Posterior cingulate gyrus (tissue), 11 donors: ENCODE measurements at regions of chr3 and their contacts with region 1.

Region 1: DNA sequence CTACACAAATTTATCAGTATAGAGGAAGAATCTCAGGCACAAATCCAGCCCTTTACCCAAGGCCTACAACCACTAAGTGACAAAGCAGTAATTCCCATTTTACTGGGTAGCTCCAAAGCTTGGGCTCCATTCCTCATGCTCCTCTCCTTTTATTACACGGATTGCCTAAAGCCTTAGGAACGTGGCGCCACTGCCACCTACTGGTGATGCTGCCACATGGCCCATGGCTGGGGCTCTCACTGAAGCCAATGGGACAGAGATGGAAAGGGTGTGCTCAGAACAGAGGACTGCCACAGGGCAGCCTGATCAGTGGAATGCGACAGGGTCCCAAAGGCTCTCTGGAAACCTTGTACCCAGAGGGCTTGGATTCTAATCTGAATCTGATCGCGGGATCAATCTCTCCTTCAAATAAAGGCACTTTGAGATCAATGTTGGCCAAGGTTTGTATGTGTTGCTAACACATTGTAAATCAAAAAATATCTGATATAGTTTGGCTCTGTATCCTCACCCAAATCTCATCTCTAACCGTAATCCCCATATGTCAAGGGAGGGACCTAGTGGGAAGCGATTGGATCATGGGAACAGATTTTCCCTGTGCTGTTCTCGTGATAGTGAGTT is 33.5 kb upstream of the LYZL4 start:
- DNase-seq: peak; percentile 79 to 98 (median 91)

Region 2: DNA sequence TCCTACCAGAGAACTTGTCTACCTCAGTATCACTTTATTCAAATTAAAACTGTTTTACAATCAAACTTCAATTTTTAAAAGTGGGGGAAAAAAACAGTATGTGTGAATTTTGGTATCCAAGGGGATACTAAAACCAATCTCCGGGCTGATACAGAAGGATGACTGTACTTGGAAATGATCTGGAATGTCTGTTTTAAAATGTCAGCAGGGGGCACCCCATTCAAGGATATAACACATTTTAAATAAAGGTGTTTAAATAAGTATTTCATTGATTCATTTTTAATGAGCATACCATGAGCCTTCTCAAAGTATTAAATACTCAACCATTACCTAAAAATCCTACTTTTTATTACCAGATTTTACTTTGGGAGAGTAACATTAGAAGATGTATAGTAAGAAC is 550.0 kb before region 1 on chr3:
- intact Hi-C with region 1: loop called (anchors 10 kb)
- DNase-seq: no peak

Region 3: DNA sequence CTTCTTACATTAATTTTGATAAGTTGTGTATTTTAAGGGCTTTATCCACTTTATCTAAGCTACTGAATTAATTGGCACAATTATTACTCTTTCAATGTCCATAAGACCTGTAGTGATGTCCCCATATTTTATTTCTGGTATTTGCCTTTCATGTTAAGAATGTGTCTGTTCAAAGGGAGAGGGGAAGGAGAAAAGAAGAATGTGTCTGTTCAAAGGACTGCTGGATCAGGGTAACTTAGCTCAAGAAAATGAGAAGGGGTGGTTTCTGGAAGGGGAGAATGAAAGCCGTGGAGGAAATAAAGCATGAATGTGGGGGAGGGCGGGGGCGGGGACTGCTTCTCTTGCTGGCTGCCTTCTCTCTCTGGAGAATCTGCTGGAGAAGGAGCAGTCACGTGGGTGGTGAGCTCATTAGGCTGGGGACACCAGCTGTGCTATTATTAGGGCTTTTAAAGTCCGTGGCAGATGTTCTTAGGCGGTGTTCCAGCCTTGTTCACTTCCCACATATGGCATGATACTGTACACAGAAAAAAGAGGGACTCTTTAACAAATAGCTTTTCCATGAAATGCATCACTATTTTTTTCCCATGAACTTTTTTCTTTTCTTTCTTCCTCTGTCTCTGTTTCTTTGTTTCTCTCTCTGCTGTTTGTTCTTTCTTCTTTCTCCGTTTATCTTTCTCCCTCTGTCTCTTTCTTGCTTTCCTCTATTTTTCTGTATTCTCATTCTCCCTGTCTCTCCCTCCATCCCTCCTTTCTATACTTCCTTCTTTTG is 418.4 kb before region 1 on chr3:
- intact Hi-C with region 1: no loop called
- DNase-seq: peak; percentile 72 to 97 (median 82)

Region 4: GRCh38 chr3:42118762-42119361 is 325.1 kb before region 1 on chr3:
- intact Hi-C with region 1: loop called (anchors 5 kb)
- DNase-seq: peak in 4 of 10 donors; percentile 40 to 88 (median 55)

Region 5: GRCh38 chr3:42229942-42230688 is 213.8 kb before region 1 on chr3:
- intact Hi-C with region 1: loop called (anchors 1 kb)
- DNase-seq: peak in 1 of 10 donors; percentile 62

Region 6: DNA sequence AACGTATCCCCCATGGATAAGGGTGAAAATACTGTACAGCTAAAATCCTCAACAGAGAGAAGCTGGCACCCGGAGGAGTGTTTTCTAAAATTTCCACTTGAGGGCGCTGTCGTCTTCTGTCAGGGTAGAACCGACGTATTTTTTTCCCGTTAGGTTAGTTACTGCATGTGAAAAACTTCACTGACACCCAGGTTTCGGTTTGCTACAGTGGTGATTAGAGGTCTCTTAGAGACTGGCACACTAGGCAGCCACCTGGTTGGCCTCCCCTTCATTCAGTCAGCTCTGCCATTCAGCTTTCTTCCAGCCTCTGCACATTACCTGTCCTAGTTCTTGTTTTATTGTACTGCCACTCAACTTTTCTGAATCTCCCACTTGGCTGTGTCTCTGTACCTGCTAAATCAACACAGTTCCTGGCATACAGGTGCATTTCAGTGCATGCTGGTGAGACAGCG is 196.3 kb before region 1 on chr3:
- intact Hi-C with region 1: loop called (anchors 1 kb)
- DNase-seq: peak in 8 of 10 donors; percentile 46 to 90 (median 72)

Region 7: GRCh38 chr3:42371776-42372175 is 72.2 kb before region 1 on chr3:
- intact Hi-C with region 1: loop called (anchors 2 kb)
- DNase-seq: peak in 9 of 10 donors; percentile 12 to 94 (median 62)

Region 8: GRCh38 chr3:42468111-42468510 is 24.2 kb after region 1 on chr3:
- intact Hi-C with region 1: no loop called
- DNase-seq: no peak

Region 9: DNA sequence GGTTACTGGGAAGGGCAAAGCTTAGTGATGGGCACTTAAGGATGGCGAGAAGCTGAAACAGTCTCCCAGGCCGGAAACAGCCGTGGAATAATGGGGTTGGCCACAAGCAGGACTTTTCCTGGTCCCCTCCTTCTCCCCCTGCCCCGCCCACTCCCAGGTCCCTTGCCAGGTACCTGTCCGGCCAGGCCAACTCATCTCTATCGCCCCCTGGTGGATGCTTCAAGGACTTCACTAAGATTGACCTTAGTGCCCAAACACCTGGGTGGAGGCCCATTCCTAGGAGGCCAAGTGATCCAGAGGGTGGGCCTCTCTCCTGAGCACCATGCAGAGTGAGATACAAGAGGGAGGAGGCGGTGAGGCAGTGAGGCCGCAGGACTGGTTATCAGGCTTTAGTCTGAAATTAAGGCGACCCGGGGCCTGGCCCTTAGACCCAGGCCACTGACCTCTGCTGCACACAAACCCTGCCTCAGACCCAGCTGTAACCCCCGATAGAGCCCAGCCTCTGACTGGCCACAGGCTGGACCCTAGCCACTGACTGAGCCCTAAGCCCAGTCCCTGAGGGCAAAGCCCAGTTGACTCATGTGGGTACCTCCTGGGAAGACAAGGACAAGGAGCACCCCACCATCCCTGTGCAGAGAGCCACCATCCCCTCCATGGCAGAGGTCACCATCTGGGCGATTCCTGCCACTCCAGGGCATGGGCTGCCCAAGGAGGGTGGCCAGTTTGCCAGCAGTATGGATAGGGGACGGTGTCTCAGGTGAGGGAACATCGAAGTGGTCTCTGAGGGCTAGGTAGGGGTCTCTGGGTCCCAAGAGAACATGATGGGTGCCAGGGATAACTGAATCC is 96.2 kb after region 1 on chr3:
- intact Hi-C with region 1: loop called (anchors 10 kb)
- DNase-seq: peak in 3 of 10 donors; percentile 34 to 76 (median 49)